ENCODE measurements at regions of chr1 and their contacts with region 1.

Region 1: GRCh38 chr1:98053471-98054366 is 132.9 kb upstream of the DPYD start:
- DNase-seq: no peak
- H3K4me3 Mint-ChIP-seq: peak overlapping the region; percentile 25
- H3K27ac Mint-ChIP-seq: peak overlapping the region; percentile 61
- H3K4me1 Mint-ChIP-seq: peaks cover 6% of the 10 kb centered on the region
- H3K27me3 Mint-ChIP-seq: no peaks in the 10 kb centered on the region
- CTCF ChIP-seq: peak; percentile 52

Region 2: GRCh38 chr1:96966536-96967138 is 1087.1 kb before region 1 on chr1:
- CTCF ChIA-PET with region 1: no interaction called
- POLR2A ChIA-PET with region 1: no interaction called
- intact Hi-C with region 1: loop called (anchors 1 kb)
- DNase-seq: peak; percentile 70
- H3K4me3 Mint-ChIP-seq: peak overlapping the region; percentile 4
- H3K27ac Mint-ChIP-seq: no peak overlapping the region
- H3K4me1 Mint-ChIP-seq: peaks cover 6% of the 10 kb centered on the region
- H3K27me3 Mint-ChIP-seq: no peaks in the 10 kb centered on the region
- CTCF ChIP-seq: peak; percentile 90

Region 3: DNA sequence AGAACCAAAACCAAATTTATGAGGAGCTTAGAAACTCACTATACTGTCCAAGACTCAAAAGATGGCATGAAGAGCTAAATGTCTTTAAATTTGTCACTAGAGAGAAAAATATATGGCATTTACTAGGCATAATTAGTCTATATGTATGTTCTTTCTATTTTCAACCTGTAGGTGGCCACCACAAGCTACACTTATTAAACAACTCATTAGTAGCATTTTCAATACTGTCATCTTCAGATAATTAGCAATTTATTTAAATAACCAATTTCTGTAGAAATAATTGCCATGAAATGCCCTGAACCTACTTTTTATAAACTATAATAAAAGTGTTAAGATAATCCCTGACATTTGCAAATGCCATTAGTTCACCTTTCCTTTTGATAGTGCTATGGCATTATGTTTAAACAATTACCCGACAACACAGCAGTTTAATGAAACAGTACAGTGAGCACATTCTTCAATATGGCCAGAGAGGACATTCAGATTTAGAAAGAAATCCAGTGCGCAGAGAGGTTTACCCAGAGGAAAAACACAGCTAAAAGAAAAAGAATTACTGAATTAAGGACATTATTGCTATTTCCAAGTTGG is 809.7 kb before region 1 on chr1:
- CTCF ChIA-PET with region 1: no interaction called
- POLR2A ChIA-PET with region 1: no interaction called
- intact Hi-C with region 1: loop called (anchors 2 kb)
- DNase-seq: peak; percentile 35
- H3K4me3 Mint-ChIP-seq: no peak overlapping the region
- H3K27ac Mint-ChIP-seq: peak overlapping the region; percentile 53
- H3K4me1 Mint-ChIP-seq: peaks cover 5% of the 10 kb centered on the region
- H3K27me3 Mint-ChIP-seq: no peaks in the 10 kb centered on the region
- CTCF ChIP-seq: peak; percentile 51

Region 4: DNA sequence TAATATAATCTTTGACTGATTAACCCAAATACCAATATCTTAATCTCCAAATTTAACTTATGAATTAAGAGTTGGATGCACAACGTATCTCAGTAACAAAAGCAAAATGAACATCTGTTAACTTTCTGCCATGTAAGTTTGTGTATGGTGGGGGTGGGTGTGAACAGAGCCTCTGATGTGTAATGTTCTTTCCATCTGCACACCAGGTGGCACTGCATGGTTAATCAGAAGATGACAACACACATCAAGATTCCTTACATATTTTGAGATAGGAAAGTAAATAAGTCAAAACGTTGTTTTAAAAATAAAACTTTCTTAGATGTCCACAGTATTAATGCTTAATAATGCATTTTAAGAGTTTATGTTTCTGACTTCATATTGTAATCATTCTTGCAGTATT is 384.8 kb before region 1 on chr1:
- CTCF ChIA-PET with region 1: no interaction called
- POLR2A ChIA-PET with region 1: no interaction called
- intact Hi-C with region 1: loop called (anchors 1 kb)
- DNase-seq: peak; percentile 47
- H3K4me3 Mint-ChIP-seq: no peak overlapping the region
- H3K27ac Mint-ChIP-seq: no peak overlapping the region
- H3K4me1 Mint-ChIP-seq: no peaks in the 10 kb centered on the region
- H3K27me3 Mint-ChIP-seq: no peaks in the 10 kb centered on the region
- CTCF ChIP-seq: peak; percentile 34

Region 5: GRCh38 chr1:98133131-98133530 is 79.4 kb after region 1 on chr1:
- CTCF ChIA-PET with region 1: no interaction called
- POLR2A ChIA-PET with region 1: no interaction called
- intact Hi-C with region 1: no loop called
- DNase-seq: no peak
- H3K4me3 Mint-ChIP-seq: no peak overlapping the region
- H3K27ac Mint-ChIP-seq: no peak overlapping the region
- H3K4me1 Mint-ChIP-seq: no peaks in the 10 kb centered on the region
- H3K27me3 Mint-ChIP-seq: no peaks in the 10 kb centered on the region
- CTCF ChIP-seq: no peak

Region 6: GRCh38 chr1:98323906-98324358 is 270.2 kb after region 1 on chr1:
- CTCF ChIA-PET with region 1: no interaction called
- POLR2A ChIA-PET with region 1: interaction called, 3 read pairs
- intact Hi-C with region 1: loop called (anchors 5 kb)
- DNase-seq: peak; percentile 90
- H3K4me3 Mint-ChIP-seq: peak overlapping the region; percentile 48
- H3K27ac Mint-ChIP-seq: peak overlapping the region; percentile 83
- H3K4me1 Mint-ChIP-seq: peaks cover 42% of the 10 kb centered on the region
- H3K27me3 Mint-ChIP-seq: no peaks in the 10 kb centered on the region
- CTCF ChIP-seq: no peak

Measured in MCF 10A (cell line).